ENCODE measurements at regions of chr16 and their contacts with region 1.

Region 1: GRCh38 chr16:31873556-31874365 is at the start of gene ZNF267:
- DNase-seq: peak; percentile 70
- ATAC-seq: peak; percentile 89
- H3K4me3 ChIP-seq: peak within 1 kb of the TSS; percentile 95 to 98
- H3K27ac ChIP-seq: peak within 1 kb of the TSS; percentile 83
- H3K4me1 ChIP-seq: peaks cover 9 to 35% of the 10 kb centered on the region in 2 experiments; a peak in 3 of 4 replicates
- H3K27me3 ChIP-seq: no peaks in the 10 kb centered on the region
- CTCF ChIP-seq: no peak
- POLR2A ChIP-seq: peak; percentile 45
- RAD21 ChIP-seq: no peak
- total RNA-seq, gene ZNF267: 15.9 TPM

Region 2: GRCh38 chr16:31507929-31508705 is 365.6 kb before region 1 on chr16 and contains the start of gene RUSF1:
- CTCF ChIA-PET with region 1: no interaction called
- POLR2A ChIA-PET with region 1: no interaction called
- RAD21 ChIA-PET with region 1: no interaction called
- intact Hi-C with region 1: loop called (anchors 10 kb)
- DNase-seq: peak; percentile 75
- ATAC-seq: peak; percentile 90
- H3K4me3 ChIP-seq: peak within 1 kb of the TSS; percentile 97 to 98
- H3K27ac ChIP-seq: peak within 1 kb of the TSS; percentile 76
- H3K4me1 ChIP-seq: peaks cover 14 to 20% of the 10 kb centered on the region in 2 experiments; a peak in 3 of 4 replicates
- H3K27me3 ChIP-seq: no peaks in the 10 kb centered on the region
- CTCF ChIP-seq: no peak
- POLR2A ChIP-seq: peak; percentile 73
- RAD21 ChIP-seq: no peak
- total RNA-seq, gene RUSF1: 59.3 TPM

Region 3: DNA sequence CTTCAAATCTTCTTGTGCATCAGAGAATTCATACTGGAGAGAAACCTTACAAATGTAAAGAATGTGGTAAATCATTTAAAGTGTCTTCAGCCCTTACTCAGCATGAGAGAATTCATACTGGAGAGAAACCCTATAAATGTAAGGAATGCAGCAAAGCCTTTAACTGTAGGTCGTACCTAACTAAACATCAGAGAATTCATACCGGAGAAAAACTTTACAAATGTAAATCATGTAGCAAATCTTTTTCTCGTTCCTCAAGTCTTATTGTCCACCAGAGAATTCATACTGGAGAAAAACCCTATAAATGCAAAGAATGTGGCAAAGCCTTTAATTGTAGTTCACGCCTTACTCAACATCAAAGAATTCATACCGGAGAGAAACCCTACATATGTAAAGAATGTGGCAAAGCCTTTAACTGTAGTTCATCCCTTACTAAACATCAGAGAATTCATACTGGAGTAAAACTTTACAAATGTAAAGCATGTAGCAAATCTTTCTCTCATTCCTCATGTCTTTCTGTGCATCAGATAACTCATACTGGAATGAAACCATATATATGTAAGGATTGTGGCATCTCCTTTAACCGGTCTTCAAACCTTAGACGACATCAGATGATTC is 118.7 kb before region 1 on chr16:
- CTCF ChIA-PET with region 1: no interaction called
- POLR2A ChIA-PET with region 1: no interaction called
- RAD21 ChIA-PET with region 1: no interaction called
- intact Hi-C with region 1: no loop called
- DNase-seq: no peak
- ATAC-seq: no peak
- H3K4me3 ChIP-seq: no peak overlapping the region
- H3K27ac ChIP-seq: no peak overlapping the region
- H3K4me1 ChIP-seq: no peaks in the 10 kb centered on the region
- H3K27me3 ChIP-seq: no peaks in the 10 kb centered on the region
- CTCF ChIP-seq: no peak
- POLR2A ChIP-seq: no peak
- RAD21 ChIP-seq: no peak

Region 4: GRCh38 chr16:31785126-31785525 is 88.6 kb before region 1 on chr16:
- CTCF ChIA-PET with region 1: no interaction called
- POLR2A ChIA-PET with region 1: no interaction called
- RAD21 ChIA-PET with region 1: no interaction called
- intact Hi-C with region 1: no loop called
- DNase-seq: no peak
- ATAC-seq: no peak
- H3K4me3 ChIP-seq: no peak overlapping the region
- H3K27ac ChIP-seq: no peak overlapping the region
- H3K4me1 ChIP-seq: no peaks in the 10 kb centered on the region
- H3K27me3 ChIP-seq: no peaks in the 10 kb centered on the region
- CTCF ChIP-seq: no peak
- POLR2A ChIP-seq: no peak
- RAD21 ChIP-seq: no peak

Region 5: GRCh38 chr16:31833047-31833446 is 40.7 kb before region 1 on chr16:
- CTCF ChIA-PET with region 1: no interaction called
- POLR2A ChIA-PET with region 1: no interaction called
- RAD21 ChIA-PET with region 1: no interaction called
- intact Hi-C with region 1: no loop called
- DNase-seq: no peak
- ATAC-seq: no peak
- H3K4me3 ChIP-seq: no peak overlapping the region
- H3K27ac ChIP-seq: no peak overlapping the region
- H3K4me1 ChIP-seq: no peaks in the 10 kb centered on the region
- H3K27me3 ChIP-seq: no peaks in the 10 kb centered on the region
- CTCF ChIP-seq: no peak
- POLR2A ChIP-seq: no peak
- RAD21 ChIP-seq: no peak